Gastrocnemius medialis (tissue), 4 donors: ENCODE measurements at regions of chr1 and their contacts with region 1.

Region 1: GRCh38 chr1:214029796-214030195 is 42.0 kb downstream of the PROX1 start:
- DNase-seq: peak; percentile 39 to 62
- ATAC-seq: peak; percentile 92 to 96
- H3K4me3 ChIP-seq: peak overlapping the region; percentile 20 to 29 (median 23)
- H3K27ac ChIP-seq: peak overlapping the region; percentile 80 to 90 (median 86)
- H3K4me1 ChIP-seq: peaks cover 17 to 18% of the 10 kb centered on the region in 2 donors
- H3K27me3 ChIP-seq: no peaks in the 10 kb centered on the region
- CTCF ChIP-seq: no peak
- POLR2A ChIP-seq: no peak

Region 2: GRCh38 chr1:213953806-213954205 is 76.0 kb before region 1 on chr1:
- in situ Hi-C with region 1: no loop called
- intact Hi-C with region 1: no loop called
- DNase-seq: no peak
- ATAC-seq: no peak
- H3K4me3 ChIP-seq: no peak overlapping the region
- H3K27ac ChIP-seq: no peak overlapping the region
- H3K4me1 ChIP-seq: no peaks in the 10 kb centered on the region
- H3K27me3 ChIP-seq: no peaks in the 10 kb centered on the region
- CTCF ChIP-seq: no peak
- POLR2A ChIP-seq: no peak

Region 3: DNA sequence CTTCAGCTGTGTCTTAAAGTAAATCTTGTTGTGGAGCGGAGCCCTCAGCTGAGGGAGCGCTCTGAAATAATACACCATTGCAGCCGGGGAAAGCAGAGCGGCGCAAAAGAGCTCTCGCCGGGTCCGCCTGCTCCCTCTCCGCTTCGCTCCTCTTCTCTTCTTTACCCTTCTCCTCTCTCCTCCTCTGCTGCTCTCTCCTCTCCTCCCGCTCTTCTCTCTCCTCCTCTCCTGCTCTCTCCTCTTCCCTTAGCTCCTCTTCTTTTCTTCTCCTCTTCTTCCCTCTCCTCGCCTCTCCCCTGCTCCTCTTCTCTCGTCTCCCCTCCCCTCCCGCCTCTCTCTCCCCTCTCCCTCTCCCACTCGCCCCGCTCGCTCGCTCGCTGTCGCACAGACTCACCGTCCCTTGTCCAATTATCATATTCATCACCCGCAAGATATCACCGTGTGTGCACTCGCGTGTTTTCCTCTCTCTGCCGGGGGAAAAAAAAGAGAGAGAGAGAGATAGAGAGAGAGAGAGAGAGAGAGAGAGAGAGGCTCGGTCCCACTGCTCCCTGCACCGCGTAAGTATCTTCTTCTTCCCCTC is 41.8 kb before region 1 on chr1 and contains the start of gene PROX1:
- in situ Hi-C with region 1: no loop called
- intact Hi-C with region 1: loop called (anchors 2 kb)
- DNase-seq: peak in 1 of 2 donors; percentile 73
- ATAC-seq: peak; percentile 88 to 89
- H3K4me3 ChIP-seq: peak within 1 kb of the TSS; percentile 65 to 85 (median 82)
- H3K27ac ChIP-seq: peak within 1 kb of the TSS; percentile 90 to 92 (median 90)
- H3K4me1 ChIP-seq: peaks cover 26 to 28% of the 10 kb centered on the region in 2 donors
- H3K27me3 ChIP-seq: peaks cover 0 to 27% (median 26%) of the 10 kb centered on the region in 3 donors
- CTCF ChIP-seq: peak in 2 of 5 experiments; percentile 28 to 42
- POLR2A ChIP-seq: peak; percentile 86 to 93
- total RNA-seq, gene PROX1: 4.1 to 8.0 (median 5.5) TPM

Region 4: DNA sequence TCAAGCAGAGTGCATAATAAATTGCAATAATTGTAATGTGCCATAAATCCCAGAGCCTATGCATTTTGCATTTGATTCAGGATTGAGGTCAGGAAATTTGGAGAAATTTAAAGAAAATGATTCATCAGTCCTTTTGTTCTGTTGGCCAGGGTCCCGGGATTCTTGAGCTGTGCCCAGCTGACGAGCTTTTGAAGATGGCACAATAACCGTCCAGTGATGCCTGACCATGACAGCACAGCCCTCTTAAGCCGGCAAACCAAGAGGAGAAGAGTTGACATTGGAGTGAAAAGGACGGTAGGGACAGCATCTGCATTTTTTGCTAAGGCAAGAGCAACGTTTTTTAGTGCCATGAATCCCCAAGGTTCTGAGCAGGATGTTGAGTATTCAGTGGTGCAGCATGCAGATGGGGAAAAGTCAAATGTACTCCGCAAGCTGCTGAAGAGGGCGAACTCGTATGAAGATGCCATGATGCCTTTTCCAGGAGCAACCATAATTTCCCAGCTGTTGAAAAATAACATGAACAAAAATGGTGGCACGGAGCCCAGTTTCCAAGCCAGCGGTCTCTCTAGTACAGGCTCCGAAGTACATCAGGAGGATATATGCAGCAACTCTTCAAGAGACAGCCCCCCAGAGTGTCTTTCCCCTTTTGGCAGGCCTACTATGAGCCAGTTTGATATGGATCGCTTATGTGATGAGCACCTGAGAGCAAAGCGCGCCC is 33.3 kb before region 1 on chr1:
- in situ Hi-C with region 1: no loop called
- intact Hi-C with region 1: loop called (anchors 2 kb)
- DNase-seq: peak; percentile 32 to 66
- ATAC-seq: peak; percentile 93 to 94
- H3K4me3 ChIP-seq: peak overlapping the region in 2 of 4 donors; percentile 0 to 1
- H3K27ac ChIP-seq: peak overlapping the region; percentile 58 to 69 (median 62)
- H3K4me1 ChIP-seq: peaks cover 10 to 11% of the 10 kb centered on the region in 2 donors
- H3K27me3 ChIP-seq: peaks cover 0 to 3% (median 2%) of the 10 kb centered on the region in 3 donors
- CTCF ChIP-seq: no peak
- POLR2A ChIP-seq: no peak